Endothelial cell of umbilical vein (primary cell): ENCODE measurements at regions of chr12 and their contacts with region 1.

Region 1: GRCh38 chr12:105445249-105446015 is 114.9 kb downstream of the C12orf75 start:
- DNase-seq: peak; percentile 98
- H3K4me3 ChIP-seq: no peak overlapping the region
- H3K27ac ChIP-seq: peak overlapping the region; percentile 98
- H3K4me1 ChIP-seq: peaks cover 29% of the 10 kb centered on the region
- H3K27me3 ChIP-seq: no peaks in the 10 kb centered on the region
- CTCF ChIP-seq: no peak
- POLR2A ChIP-seq: peak; percentile 86

Region 2: DNA sequence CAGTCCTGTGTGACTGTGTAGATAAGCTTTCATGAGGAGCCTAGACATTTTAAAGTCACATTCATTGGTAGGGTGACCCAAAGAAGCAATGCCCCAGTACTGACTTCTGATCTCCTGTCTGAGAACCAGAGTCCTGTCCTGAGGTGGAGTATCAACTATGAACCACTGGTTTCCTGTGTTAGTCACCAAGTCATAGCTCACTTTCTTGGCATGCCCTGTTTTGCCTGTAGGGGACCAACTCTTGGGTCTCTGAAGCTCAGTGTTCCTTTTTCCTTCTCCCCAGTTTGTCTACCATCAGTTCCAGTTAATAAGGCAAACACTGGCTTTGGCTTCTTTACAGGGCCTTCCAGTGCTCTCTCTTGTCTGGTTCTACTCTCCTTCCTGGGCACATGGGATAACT is 17.5 kb before region 1 on chr12:
- CTCF ChIA-PET with region 1: interaction called, 7 read pairs
- POLR2A ChIA-PET with region 1: no interaction called
- dilution Hi-C with region 1: no loop called
- intact Hi-C with region 1: loop called (anchors 2 kb)
- DNase-seq: peak; percentile 76
- H3K4me3 ChIP-seq: no peak overlapping the region
- H3K27ac ChIP-seq: peak overlapping the region; percentile 46
- H3K4me1 ChIP-seq: peaks cover 16% of the 10 kb centered on the region
- H3K27me3 ChIP-seq: no peaks in the 10 kb centered on the region
- CTCF ChIP-seq: peak; percentile 27 to 39
- POLR2A ChIP-seq: no peak

Region 3: DNA sequence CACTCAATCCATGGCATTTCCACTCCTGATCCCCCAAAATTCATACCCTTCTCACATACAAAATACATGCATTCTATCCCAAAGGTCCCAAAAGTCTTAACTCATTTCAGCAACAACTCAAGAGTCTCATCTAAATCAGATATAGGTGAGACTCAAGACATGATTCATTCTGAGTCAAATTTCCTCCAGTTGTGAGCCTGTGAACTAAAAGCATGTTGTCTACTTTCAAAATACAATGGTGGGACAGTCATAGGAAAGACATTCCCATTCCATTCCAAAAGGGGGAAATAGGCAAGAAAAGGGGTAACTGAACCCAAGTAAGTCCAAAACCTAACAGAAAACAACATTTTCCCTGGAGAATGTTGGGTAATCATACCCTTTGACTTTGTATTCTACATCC is 11.6 kb before region 1 on chr12:
- CTCF ChIA-PET with region 1: interaction called, 9 read pairs
- POLR2A ChIA-PET with region 1: no interaction called
- dilution Hi-C with region 1: no loop called
- intact Hi-C with region 1: loop called (anchors 1 kb)
- DNase-seq: peak; percentile 96
- H3K4me3 ChIP-seq: no peak overlapping the region
- H3K27ac ChIP-seq: peak overlapping the region; percentile 98
- H3K4me1 ChIP-seq: peaks cover 18% of the 10 kb centered on the region
- H3K27me3 ChIP-seq: no peaks in the 10 kb centered on the region
- CTCF ChIP-seq: no peak
- POLR2A ChIP-seq: no peak

Region 4: GRCh38 chr12:105462831-105463230 is 17.4 kb after region 1 on chr12:
- CTCF ChIA-PET with region 1: interaction called, 10 read pairs
- POLR2A ChIA-PET with region 1: interaction called, 15 read pairs
- dilution Hi-C with region 1: no loop called
- intact Hi-C with region 1: loop called (anchors 1 kb)
- DNase-seq: no peak
- H3K4me3 ChIP-seq: no peak overlapping the region
- H3K27ac ChIP-seq: no peak overlapping the region
- H3K4me1 ChIP-seq: peaks cover 61% of the 10 kb centered on the region
- H3K27me3 ChIP-seq: no peaks in the 10 kb centered on the region
- CTCF ChIP-seq: no peak
- POLR2A ChIP-seq: no peak

Region 5: GRCh38 chr12:105480162-105480561 is 34.7 kb after region 1 on chr12:
- CTCF ChIA-PET with region 1: interaction called, 14 read pairs
- POLR2A ChIA-PET with region 1: interaction called, 16 read pairs
- dilution Hi-C with region 1: no loop called
- intact Hi-C with region 1: loop called (anchors 1 kb)
- DNase-seq: peak; percentile 80
- H3K4me3 ChIP-seq: no peak overlapping the region
- H3K27ac ChIP-seq: peak overlapping the region; percentile 53
- H3K4me1 ChIP-seq: peaks cover 81% of the 10 kb centered on the region
- H3K27me3 ChIP-seq: no peaks in the 10 kb centered on the region
- CTCF ChIP-seq: no peak
- POLR2A ChIP-seq: no peak